ENCODE measurements at regions of chr3 and their contacts with region 1.

Region 1: DNA sequence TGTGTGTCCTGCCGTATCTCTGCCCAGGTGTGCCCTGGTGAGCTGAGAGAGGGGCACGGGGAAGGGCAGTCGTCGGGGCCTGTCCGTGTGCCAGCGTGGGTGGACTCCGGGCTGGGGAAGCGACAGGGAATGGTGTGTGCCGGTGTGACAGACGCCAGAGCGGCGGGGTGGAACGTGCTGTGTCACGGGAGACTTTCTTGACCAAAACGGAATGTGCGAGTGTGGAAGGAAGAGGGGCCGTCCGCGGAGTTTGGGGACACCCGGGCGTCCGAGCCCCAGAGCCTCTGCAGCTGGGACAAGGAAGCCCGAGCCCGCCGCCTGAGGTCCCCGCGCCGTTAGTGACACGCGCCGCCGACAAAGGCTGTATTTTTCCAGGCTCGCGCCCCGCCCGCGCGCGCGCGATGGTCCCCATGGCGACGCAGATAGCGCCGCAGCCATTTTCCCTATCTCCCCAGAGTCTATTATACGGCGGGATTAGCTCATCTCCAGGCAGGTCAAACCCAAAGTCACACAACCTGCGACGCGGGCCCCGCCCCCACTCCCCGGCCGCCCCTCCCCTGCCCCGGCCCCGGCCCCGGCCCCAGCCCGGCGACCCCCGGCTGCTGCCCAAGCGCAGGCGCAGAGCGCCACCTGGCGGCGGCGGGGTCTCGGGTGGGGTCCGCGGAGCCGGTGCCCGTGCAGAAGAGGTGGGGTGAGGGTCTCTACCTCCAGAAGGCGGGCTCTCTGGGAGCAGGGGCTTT is 4.6 kb upstream of the GATA2 start:
- DNase-seq: peak; percentile 79 to 92 (median 82)
- ATAC-seq: peak; percentile 65
- H3K4me3 ChIP-seq: peak overlapping the region; percentile 18; the same call in 1 of the 2 replicates
- H3K27ac ChIP-seq: peak overlapping the region; percentile 94
- H3K4me1 ChIP-seq: peaks cover 38 to 62% of the 10 kb centered on the region in 2 experiments
- H3K27me3 ChIP-seq: no peaks in the 10 kb centered on the region
- CTCF ChIP-seq: peak in 2 of 3 experiments; percentile 42 to 65; a peak in 5 of 6 replicates
- EP300 ChIP-seq: no peak
- POLR2A ChIP-seq: peak; percentile 61
- RAD21 ChIP-seq: peak in 1 of 2 experiments; percentile 25; a peak in 1 of 4 replicates

Region 2: DNA sequence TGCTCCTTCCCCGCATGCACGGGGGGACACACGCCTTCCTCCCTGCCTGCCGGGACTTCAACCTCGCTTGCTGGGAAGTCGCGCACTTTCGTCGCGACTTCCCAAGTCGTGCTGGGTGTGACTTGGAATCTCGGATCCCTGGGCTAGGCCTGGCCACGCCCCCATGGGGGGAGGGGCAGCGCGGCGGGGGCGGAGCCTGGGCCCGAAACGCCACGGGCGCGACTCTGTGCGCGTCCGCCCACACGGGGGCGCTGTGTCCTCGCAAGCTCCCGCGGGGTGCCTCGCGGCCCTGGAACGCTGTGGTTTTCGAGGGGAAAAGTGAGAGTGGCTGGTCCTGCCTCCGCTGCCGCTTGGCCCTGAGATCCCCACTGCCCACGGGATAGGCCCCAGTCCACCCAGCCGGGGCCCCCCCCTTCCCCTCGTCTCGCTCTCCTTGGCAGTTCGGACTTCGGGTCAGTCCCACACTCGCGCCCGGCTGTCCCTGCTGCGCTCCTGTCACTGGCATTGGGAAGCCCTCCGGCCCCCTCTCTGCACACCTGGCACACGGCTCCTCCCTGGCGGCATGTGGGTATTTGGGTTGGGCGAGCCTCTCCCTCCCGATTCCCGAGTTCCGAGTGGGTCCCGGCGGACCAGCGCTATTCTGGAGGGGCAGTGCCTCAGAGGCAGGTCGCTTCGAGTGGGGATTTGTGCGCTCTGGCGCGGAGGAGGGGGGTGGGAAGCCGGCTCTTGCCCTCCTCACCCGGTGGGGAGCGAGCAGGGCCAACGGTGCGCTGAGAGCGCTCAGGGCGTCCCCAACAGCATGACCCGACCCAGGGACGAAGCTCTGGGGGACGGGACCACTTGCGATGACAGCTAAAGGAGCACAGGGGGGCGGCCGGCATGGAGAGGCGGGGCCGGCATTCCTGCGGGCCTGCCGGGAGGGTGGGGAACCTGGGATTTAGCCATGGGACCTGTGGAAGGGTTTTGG is 421.8 kb before region 1 on chr3:
- CTCF ChIA-PET with region 1: no interaction called
- POLR2A ChIA-PET with region 1: interaction called, 3 read pairs
- in situ Hi-C with region 1: no loop called
- intact Hi-C with region 1: loop called (anchors 10 kb)
- DNase-seq: peak; percentile 82 to 90 (median 82)
- ATAC-seq: peak; percentile 82
- H3K4me3 ChIP-seq: peak overlapping the region; percentile 47
- H3K27ac ChIP-seq: peak overlapping the region; percentile 96
- H3K4me1 ChIP-seq: peaks cover 38 to 58% of the 10 kb centered on the region in 2 experiments
- H3K27me3 ChIP-seq: no peaks in the 10 kb centered on the region
- CTCF ChIP-seq: peak; percentile 78 to 92 (median 85)
- EP300 ChIP-seq: 0 out of 2 replicates have a peak, but pooled peaks have one; percentile 12
- POLR2A ChIP-seq: peak; percentile 45
- RAD21 ChIP-seq: peak; percentile 70 to 78

Region 3: GRCh38 chr3:128095222-128095703 is 402.3 kb before region 1 on chr3:
- CTCF ChIA-PET with region 1: no interaction called
- POLR2A ChIA-PET with region 1: no interaction called
- in situ Hi-C with region 1: no loop called
- intact Hi-C with region 1: no loop called
- DNase-seq: peak; percentile 50 to 62 (median 55)
- ATAC-seq: peak; percentile 99
- H3K4me3 ChIP-seq: no peak overlapping the region
- H3K27ac ChIP-seq: no peak overlapping the region
- H3K4me1 ChIP-seq: no peaks in the 10 kb centered on the region
- H3K27me3 ChIP-seq: no peaks in the 10 kb centered on the region
- CTCF ChIP-seq: peak; percentile 57 to 77 (median 73)
- EP300 ChIP-seq: no peak
- POLR2A ChIP-seq: no peak
- RAD21 ChIP-seq: peak; percentile 64 to 72

Region 4: DNA sequence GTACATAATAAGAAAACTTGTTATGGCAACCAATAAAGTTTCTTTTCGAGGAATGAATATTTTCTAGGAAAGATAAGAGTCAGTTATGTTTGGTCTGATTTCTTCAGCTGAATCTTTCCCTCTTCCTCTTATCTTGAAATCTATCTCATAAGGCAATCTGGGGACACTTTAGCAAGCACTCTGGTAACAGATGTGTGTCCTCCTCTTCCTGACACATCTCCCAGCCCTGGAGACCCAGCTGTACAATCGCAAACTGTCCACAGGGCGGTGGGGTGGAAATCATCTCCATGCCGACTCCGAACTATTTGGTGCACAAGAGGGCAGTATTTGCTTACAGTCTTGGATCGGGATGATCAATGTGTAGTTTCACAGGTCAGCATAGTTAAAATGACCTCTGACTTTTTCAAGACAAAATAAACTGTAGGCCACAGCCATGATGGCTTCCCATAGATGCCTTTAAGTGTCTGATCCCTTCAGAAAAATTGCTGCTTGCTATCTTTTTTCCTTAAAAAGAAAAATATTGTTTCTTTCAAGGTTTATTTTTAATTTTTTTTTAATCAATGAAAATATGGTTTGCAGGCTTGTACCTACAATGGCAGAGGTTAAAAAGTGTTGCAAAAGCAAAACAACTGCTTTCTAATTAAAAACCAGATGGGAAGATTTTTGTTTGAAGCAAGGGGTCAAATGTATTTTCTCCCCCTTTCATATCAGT is 326.6 kb before region 1 on chr3:
- CTCF ChIA-PET with region 1: interaction called, 3 read pairs
- POLR2A ChIA-PET with region 1: no interaction called
- in situ Hi-C with region 1: no loop called
- intact Hi-C with region 1: loop called (anchors 5 kb)
- DNase-seq: peak; percentile 61 to 78 (median 68)
- ATAC-seq: peak; percentile 99
- H3K4me3 ChIP-seq: no peak overlapping the region
- H3K27ac ChIP-seq: no peak overlapping the region
- H3K4me1 ChIP-seq: peaks cover 0 to 4% of the 10 kb centered on the region in 2 experiments; a peak in 2 of 5 replicates
- H3K27me3 ChIP-seq: no peaks in the 10 kb centered on the region
- CTCF ChIP-seq: peak; percentile 83 to 99 (median 98)
- EP300 ChIP-seq: no peak
- POLR2A ChIP-seq: no peak
- RAD21 ChIP-seq: peak; percentile 73 to 85

Region 5: GRCh38 chr3:128316481-128316891 is 181.1 kb before region 1 on chr3:
- CTCF ChIA-PET with region 1: no interaction called
- POLR2A ChIA-PET with region 1: no interaction called
- in situ Hi-C with region 1: no loop called
- intact Hi-C with region 1: loop called (anchors 10 kb)
- DNase-seq: no peak
- ATAC-seq: no peak
- H3K4me3 ChIP-seq: no peak overlapping the region
- H3K27ac ChIP-seq: no peak overlapping the region
- H3K4me1 ChIP-seq: peaks cover 0 to 3% of the 10 kb centered on the region in 2 experiments; a peak in 2 of 5 replicates
- H3K27me3 ChIP-seq: no peaks in the 10 kb centered on the region
- CTCF ChIP-seq: no peak
- EP300 ChIP-seq: no peak
- POLR2A ChIP-seq: no peak
- RAD21 ChIP-seq: no peak

Region 6: DNA sequence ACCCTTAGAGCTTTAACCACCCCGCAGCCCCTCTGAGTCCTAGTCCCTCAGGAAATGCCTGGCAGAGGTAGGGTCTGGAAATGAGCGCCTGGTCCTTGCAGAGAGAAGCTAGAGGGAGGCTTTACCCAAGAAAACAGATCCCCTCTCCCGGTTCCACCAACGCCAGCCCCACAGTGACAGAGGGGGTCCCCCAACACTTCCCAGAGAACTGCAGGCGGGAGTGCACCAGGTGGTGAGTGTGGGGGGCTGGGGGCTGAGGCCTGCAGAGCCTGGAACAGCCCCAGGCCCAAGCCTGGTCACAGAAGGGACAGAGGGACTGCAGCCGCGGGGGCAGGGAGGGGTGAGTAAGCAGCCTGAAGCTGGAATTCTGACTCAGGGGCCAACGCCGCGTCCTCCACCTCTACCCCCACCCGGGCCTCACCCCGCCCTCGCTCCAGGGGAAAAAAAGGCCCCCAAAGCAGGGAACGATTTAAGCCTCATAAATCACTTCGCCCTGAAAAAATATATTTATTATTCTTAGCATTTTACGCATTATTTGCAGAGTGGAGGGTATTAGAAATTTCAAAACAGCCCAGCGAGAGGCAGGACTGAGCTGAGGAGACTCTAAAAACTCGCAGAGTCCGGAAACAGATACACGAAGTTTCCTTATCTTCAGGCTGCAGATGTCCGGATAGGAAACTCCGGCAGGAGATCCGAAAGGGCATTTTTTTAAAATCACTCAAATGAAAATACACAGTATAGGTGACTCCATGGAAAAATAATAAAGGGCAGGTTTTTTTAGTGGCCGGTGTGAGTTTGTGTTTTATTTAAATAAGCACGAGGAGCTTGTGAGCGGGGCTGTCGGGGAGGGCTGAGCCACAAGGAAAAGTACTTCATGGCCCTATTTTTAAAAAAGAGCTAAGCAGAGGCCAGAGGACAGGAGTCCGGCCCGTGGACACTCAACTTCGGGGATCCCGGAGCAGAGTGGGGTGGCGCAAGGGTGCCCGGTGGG is 14.6 kb before region 1 on chr3:
- CTCF ChIA-PET with region 1: no interaction called
- POLR2A ChIA-PET with region 1: interaction called, 17 read pairs
- in situ Hi-C with region 1: no loop called
- intact Hi-C with region 1: no loop called
- DNase-seq: peak; percentile 53 to 84 (median 64)
- ATAC-seq: peak; percentile 51
- H3K4me3 ChIP-seq: peak overlapping the region; percentile 98
- H3K27ac ChIP-seq: peak overlapping the region; percentile 98
- H3K4me1 ChIP-seq: peaks cover 17 to 59% of the 10 kb centered on the region in 2 experiments; a peak in 3 of 5 replicates
- H3K27me3 ChIP-seq: no peaks in the 10 kb centered on the region
- CTCF ChIP-seq: peak in 1 of 3 experiments; percentile 26; a peak in 2 of 6 replicates
- EP300 ChIP-seq: peak; percentile 87
- POLR2A ChIP-seq: peak; percentile 24; the same call in 1 of the 2 replicates
- RAD21 ChIP-seq: no peak

Region 7: GRCh38 chr3:128567705-128568356 is 70.3 kb after region 1 on chr3:
- CTCF ChIA-PET with region 1: no interaction called
- POLR2A ChIA-PET with region 1: no interaction called
- in situ Hi-C with region 1: no loop called
- intact Hi-C with region 1: loop called (anchors 5 kb)
- DNase-seq: no peak
- ATAC-seq: peak; percentile 63
- H3K4me3 ChIP-seq: no peak overlapping the region
- H3K27ac ChIP-seq: no peak overlapping the region
- H3K4me1 ChIP-seq: peaks cover 4 to 5% of the 10 kb centered on the region in 2 experiments; a peak in 3 of 5 replicates
- H3K27me3 ChIP-seq: no peaks in the 10 kb centered on the region
- CTCF ChIP-seq: 0 out of 6 replicates have a peak, but pooled peaks of 1 of the 3 experiments have one; percentile 23
- EP300 ChIP-seq: no peak
- POLR2A ChIP-seq: no peak
- RAD21 ChIP-seq: no peak